Activated T-helper 1 cell treated with anti-CD3 and anti-CD28 coated beads, Interleukin-12 subunit alpha, Interleukin-12 subunit beta, Interleukin-2, Interleukin-4 antibody, amounts not matched to agents 30 ng/mL and 10 ng/mL and 1 ng/mL, durations not matched to agents 14 hours and 24 hours and 36 hours (primary cell): ENCODE measurements at regions of chr2 and their contacts with region 1.

Region 1: GRCh38 chr2:42132966-42133641 is 36.0 kb upstream of the EML4 start:
- DNase-seq: peak; percentile 87
- H3K4me3 Mint-ChIP-seq: peak overlapping the region; percentile 67
- H3K27ac Mint-ChIP-seq: peak overlapping the region; percentile 95
- H3K4me1 Mint-ChIP-seq: peaks cover 90% of the 10 kb centered on the region
- H3K27me3 Mint-ChIP-seq: no peaks in the 10 kb centered on the region

Region 2: DNA sequence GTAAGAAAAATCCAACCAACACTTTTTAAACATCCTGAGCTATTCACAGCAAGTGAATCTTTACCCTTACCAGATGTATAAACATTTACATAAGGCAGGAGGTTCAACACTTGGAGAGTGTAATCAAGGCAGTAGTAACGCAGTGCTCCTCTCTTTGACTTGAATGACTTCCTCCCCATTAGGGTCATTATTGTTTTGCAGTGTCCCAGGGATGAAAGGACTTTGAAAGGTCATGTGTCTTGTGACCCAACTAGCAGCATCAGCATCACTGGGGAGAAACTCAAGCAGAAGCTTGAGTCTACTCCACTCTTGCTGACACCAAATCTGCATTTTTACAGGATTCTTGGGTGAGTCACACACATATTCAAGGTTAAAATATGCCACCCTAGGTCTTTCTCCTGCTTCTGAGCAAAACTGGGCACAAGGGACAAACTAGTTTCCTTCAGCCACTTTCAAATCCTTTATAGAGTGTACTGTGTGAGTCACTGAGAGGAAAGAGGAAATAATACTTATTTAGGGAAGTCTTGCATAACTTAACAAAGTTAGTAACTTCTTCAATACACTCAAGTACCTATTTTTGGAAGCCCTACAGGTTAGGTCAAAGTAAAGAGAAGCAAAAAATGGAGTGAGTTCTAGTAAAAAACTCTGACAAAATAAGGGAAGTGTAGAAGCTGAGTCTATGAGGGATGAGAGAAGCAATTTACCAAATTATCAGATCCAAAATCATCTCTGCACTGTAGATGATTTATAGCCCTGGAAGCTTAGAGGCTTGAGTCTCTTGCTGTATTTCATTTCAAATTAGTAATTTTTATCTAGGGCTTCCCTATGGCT is 15.0 kb before region 1 on chr2:
- intact Hi-C with region 1: loop called (anchors 2 kb)
- DNase-seq: no peak
- H3K4me3 Mint-ChIP-seq: no peak overlapping the region
- H3K27ac Mint-ChIP-seq: no peak overlapping the region
- H3K4me1 Mint-ChIP-seq: peaks cover 40% of the 10 kb centered on the region
- H3K27me3 Mint-ChIP-seq: no peaks in the 10 kb centered on the region

Region 3: DNA sequence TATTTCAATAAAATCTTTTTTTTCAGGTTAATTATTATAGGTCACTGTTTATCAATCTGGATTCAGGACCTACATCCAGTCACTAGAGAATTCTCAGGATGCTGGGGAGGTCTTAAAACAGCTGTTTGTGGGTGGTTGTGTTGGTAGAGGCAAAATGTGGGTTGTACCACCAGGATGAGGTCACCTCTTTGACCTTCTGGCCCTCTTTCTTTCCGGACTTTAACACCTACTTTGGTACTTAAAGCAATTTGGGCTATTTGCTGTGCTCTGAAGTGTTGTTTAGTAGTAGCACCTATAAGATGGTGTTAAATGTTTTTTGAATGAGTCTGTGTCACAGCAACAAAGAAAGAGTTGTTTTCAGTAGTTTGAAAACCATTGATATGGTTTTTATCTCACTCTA is 50.7 kb after region 1 on chr2:
- intact Hi-C with region 1: no loop called
- DNase-seq: no peak
- H3K4me3 Mint-ChIP-seq: no peak overlapping the region
- H3K27ac Mint-ChIP-seq: no peak overlapping the region
- H3K4me1 Mint-ChIP-seq: peaks cover 73% of the 10 kb centered on the region
- H3K27me3 Mint-ChIP-seq: no peaks in the 10 kb centered on the region

Region 4: GRCh38 chr2:42196403-42197267 is 63.5 kb after region 1 on chr2:
- intact Hi-C with region 1: loop called (anchors 2 kb)
- DNase-seq: peak; percentile 11
- H3K4me3 Mint-ChIP-seq: no peak overlapping the region
- H3K27ac Mint-ChIP-seq: no peak overlapping the region
- H3K4me1 Mint-ChIP-seq: peaks cover 61% of the 10 kb centered on the region
- H3K27me3 Mint-ChIP-seq: no peaks in the 10 kb centered on the region

Region 5: GRCh38 chr2:42238644-42239288 is 105.7 kb after region 1 on chr2:
- intact Hi-C with region 1: no loop called
- DNase-seq: no peak
- H3K4me3 Mint-ChIP-seq: no peak overlapping the region
- H3K27ac Mint-ChIP-seq: no peak overlapping the region
- H3K4me1 Mint-ChIP-seq: peaks cover 24% of the 10 kb centered on the region
- H3K27me3 Mint-ChIP-seq: no peaks in the 10 kb centered on the region